CD8-positive, alpha-beta T cell (primary cell): ENCODE measurements at regions of chr3 and their contacts with region 1.

Region 1: DNA sequence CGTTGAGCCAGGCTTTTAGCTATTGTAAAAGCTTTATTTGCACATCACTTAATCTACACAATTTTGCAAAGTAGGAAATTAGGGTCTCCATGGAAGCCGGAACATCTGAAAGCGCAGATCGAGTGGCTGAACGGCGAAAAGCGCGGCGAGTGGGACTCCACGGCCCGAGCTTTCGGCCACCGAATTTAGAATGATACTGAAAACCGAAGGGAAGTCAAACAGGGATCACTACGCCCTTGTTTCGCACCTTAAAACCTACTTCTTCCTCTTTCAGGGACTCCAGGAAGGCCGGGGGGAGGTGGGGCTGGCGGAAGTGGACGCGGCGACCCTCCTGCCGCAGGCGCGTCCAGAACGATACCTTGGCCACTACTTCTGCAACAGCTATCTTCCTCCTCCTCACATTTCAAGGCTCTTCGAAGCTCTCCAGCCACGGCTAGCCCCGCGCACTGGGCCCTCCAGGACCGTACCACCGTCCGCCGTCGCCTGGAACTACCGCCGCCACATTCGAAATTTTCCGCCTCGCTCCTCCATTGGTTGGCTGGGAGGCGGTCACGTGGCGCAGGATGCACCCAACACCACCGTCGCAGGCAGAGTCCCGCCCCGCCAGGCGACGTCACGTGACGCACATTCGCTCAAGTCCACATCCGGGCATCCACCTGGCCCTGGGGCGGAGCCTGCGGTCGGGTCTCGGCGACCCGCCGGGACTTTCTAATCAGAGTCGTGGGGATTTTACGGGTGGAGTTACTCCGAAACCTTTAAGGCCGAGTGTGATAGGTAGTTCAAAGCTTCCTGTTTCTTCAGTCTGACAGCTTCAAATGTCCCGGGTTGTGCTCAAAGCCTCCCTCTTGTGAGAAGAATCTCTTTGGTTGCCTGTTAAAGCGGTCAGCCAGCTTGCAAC is at the start of gene SGO1:
- DNase-seq: peak; percentile 99 to 100 (median 100)
- ATAC-seq: peak; percentile 89
- H3K4me3 ChIP-seq: peak within 1 kb of the TSS; percentile 64 to 78
- H3K4me3 Mint-ChIP-seq: no peak within 1 kb of the TSS
- H3K27ac ChIP-seq: peak within 1 kb of the TSS; percentile 71 to 94
- H3K27ac Mint-ChIP-seq: no peak within 1 kb of the TSS
- H3K4me1 ChIP-seq: peaks cover 12% of the 10 kb centered on the region
- H3K4me1 Mint-ChIP-seq: no peaks in the 10 kb centered on the region
- H3K27me3 ChIP-seq: no peaks in the 10 kb centered on the region
- H3K27me3 Mint-ChIP-seq: no peaks in the 10 kb centered on the region
- CTCF ChIP-seq: no peak
- total RNA-seq, gene SGO1: 0.33 to 0.71 TPM

Region 2: DNA sequence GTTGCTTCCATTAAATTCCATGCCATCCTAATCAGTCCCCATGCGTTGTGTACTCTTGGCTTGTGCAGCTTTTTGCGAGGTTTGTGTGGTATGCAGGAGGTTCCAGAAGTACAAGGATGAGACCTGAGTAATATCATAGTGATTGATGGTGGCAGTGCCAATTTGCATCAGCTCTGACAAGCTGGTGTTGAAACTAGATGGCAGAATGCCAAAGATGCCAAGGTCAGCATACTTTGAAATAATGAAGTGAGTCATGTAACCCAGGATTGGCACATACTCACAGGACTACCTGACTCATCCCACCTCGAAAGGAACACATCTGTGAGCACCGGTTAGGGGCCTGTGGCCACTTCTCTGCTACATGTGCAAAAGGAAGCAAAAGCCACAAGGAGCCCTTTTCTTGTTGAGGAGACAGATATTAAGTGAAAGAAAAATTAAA is 131.4 kb before region 1 on chr3:
- CTCF ChIA-PET with region 1: no interaction called
- POLR2A ChIA-PET with region 1: no interaction called
- intact Hi-C with region 1: loop called in 1 of 2 experiments (anchors 5 kb)
- DNase-seq: peak; percentile 16 to 88 (median 66)
- ATAC-seq: peak; percentile 88
- H3K4me3 ChIP-seq: no peak overlapping the region
- H3K4me3 Mint-ChIP-seq: no peak overlapping the region
- H3K27ac ChIP-seq: peak overlapping the region in 1 of 2 experiments; percentile 56
- H3K27ac Mint-ChIP-seq: no peak overlapping the region
- H3K4me1 ChIP-seq: peaks cover 37% of the 10 kb centered on the region
- H3K4me1 Mint-ChIP-seq: peaks cover 32% of the 10 kb centered on the region
- H3K27me3 ChIP-seq: no peaks in the 10 kb centered on the region
- H3K27me3 Mint-ChIP-seq: no peaks in the 10 kb centered on the region
- CTCF ChIP-seq: no peak